Sigmoid colon (tissue), 7 donors: ENCODE measurements at regions of chr17 and their contacts with region 1.

Region 1: DNA sequence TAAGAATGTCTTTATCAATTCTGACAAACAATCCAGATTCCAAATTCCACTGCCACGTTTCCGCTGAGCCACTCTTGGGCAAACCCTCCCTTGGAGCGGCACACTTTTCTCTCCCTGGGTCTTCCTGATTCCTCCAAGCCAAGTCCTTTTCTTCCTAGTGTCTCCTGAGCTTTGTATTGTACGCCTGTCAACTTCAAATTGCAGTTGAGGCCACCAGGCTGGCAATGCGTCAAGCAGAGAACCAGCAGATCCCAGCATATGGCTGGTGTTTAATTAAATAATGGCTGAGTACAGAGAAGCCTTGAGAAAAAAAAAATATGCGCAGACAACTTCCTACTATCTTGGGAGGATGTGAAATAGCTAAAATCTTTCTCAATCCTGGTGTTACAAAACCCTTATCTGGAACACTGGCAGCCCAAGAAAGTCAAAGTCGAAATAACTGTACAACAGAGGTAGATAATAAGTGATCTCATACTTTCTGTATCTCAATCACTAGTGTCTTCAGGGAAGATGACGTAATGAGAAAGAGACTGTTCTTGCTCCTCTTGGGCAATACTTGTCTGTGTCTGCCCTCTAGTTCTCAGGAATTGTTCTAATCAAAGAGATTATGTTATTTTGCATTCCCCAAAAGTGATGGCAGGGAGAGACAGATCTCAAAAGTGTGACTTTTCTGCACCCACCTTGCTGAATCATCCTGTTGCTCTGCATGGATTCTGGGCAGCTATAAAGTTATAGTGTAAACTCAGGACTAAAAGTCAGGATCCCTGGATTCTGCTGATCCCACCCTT is 15.0 kb downstream of the SMIM36 start:
- DNase-seq: no peak
- H3K4me3 ChIP-seq: no peak overlapping the region
- H3K27ac ChIP-seq: peak overlapping the region in 2 of 4 donors; percentile 6 to 35
- H3K4me1 ChIP-seq: peaks cover 0 to 11% (median 2%) of the 10 kb centered on the region in 4 donors
- H3K27me3 ChIP-seq: no peaks in the 10 kb centered on the region
- CTCF ChIP-seq: no peak
- EP300 ChIP-seq: no peak
- POLR2A ChIP-seq: no peak

Region 2: DNA sequence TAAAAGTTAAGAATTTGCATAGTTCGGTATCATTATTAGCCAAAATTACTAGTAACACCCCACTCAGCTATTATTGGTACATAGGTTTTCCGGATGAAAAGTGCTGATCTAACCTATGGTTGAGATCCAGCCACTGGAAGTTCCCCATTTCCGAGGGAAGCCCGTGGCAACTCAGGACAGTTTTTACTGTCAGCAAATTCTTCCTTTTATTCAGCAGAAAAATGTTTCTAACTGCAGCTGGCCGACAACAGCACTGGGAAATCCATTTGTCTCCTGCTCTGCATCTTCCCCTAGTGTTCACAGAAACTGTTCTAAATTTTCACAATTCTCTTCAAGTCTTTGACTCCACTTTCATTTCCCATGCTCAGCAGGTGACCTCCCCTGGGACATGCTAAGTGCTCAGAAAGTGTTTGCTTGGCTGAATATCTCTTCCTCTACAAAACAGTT is 59.1 kb before region 1 on chr17:
- intact Hi-C with region 1: loop called (anchors 5 kb)
- DNase-seq: no peak
- H3K4me3 ChIP-seq: no peak overlapping the region
- H3K27ac ChIP-seq: peak overlapping the region in 2 of 4 donors; percentile 6 to 42
- H3K4me1 ChIP-seq: peaks cover 0 to 43% (median 42%) of the 10 kb centered on the region in 4 donors
- H3K27me3 ChIP-seq: no peaks in the 10 kb centered on the region
- CTCF ChIP-seq: no peak
- EP300 ChIP-seq: no peak
- POLR2A ChIP-seq: no peak

Region 3: GRCh38 chr17:55452139-55452790 is 44.0 kb before region 1 on chr17:
- intact Hi-C with region 1: loop called (anchors 5 kb)
- DNase-seq: peak; percentile 89
- H3K4me3 ChIP-seq: no peak overlapping the region
- H3K27ac ChIP-seq: peak overlapping the region; percentile 67 to 83 (median 78)
- H3K4me1 ChIP-seq: peaks cover 0 to 65% (median 56%) of the 10 kb centered on the region in 4 donors
- H3K27me3 ChIP-seq: no peaks in the 10 kb centered on the region
- CTCF ChIP-seq: no peak
- EP300 ChIP-seq: peak in 3 of 4 donors; percentile 18 to 35 (median 34)
- POLR2A ChIP-seq: no peak

Region 4: GRCh38 chr17:55478986-55479385 is 17.3 kb before region 1 on chr17:
- intact Hi-C with region 1: no loop called
- DNase-seq: no peak
- H3K4me3 ChIP-seq: no peak overlapping the region
- H3K27ac ChIP-seq: no peak overlapping the region
- H3K4me1 ChIP-seq: no peaks in the 10 kb centered on the region
- H3K27me3 ChIP-seq: no peaks in the 10 kb centered on the region
- CTCF ChIP-seq: no peak
- EP300 ChIP-seq: no peak
- POLR2A ChIP-seq: no peak

Region 5: GRCh38 chr17:55564081-55564480 is 67.8 kb after region 1 on chr17:
- intact Hi-C with region 1: no loop called
- DNase-seq: no peak
- H3K4me3 ChIP-seq: no peak overlapping the region
- H3K27ac ChIP-seq: peak overlapping the region in 1 of 4 donors; percentile 17
- H3K4me1 ChIP-seq: peaks cover 0 to 18% (median 12%) of the 10 kb centered on the region in 4 donors
- H3K27me3 ChIP-seq: no peaks in the 10 kb centered on the region
- CTCF ChIP-seq: no peak
- EP300 ChIP-seq: no peak
- POLR2A ChIP-seq: no peak